HepG2 (cell line): ENCODE measurements at regions of chr10 and their contacts with region 1.

Region 1: GRCh38 chr10:46050941-46051623 is 5.0 kb upstream of the MSMB start:
- DNase-seq: no peak
- ATAC-seq: no peak
- H3K4me3 ChIP-seq: no peak overlapping the region
- H3K27ac ChIP-seq: peak overlapping the region; percentile 75
- H3K4me1 ChIP-seq: peaks cover 88% of the 10 kb centered on the region
- H3K27me3 ChIP-seq: no peaks in the 10 kb centered on the region
- CTCF ChIP-seq: no peak
- EP300 ChIP-seq: no peak
- POLR2A ChIP-seq: no peak
- RAD21 ChIP-seq: no peak

Region 2: GRCh38 chr10:45461034-45461433 is 590.0 kb before region 1 on chr10:
- CTCF ChIA-PET with region 1: no interaction called
- POLR2A ChIA-PET with region 1: no interaction called
- in situ Hi-C with region 1: no loop called
- intact Hi-C with region 1: no loop called
- DNase-seq: no peak
- ATAC-seq: no peak
- H3K4me3 ChIP-seq: no peak overlapping the region
- H3K27ac ChIP-seq: no peak overlapping the region
- H3K4me1 ChIP-seq: peaks cover 5% of the 10 kb centered on the region; the same call in 1 of the 2 replicates
- H3K27me3 ChIP-seq: no peaks in the 10 kb centered on the region
- CTCF ChIP-seq: no peak
- EP300 ChIP-seq: no peak
- POLR2A ChIP-seq: no peak
- RAD21 ChIP-seq: no peak

Region 3: GRCh38 chr10:46035923-46036849 is 14.9 kb before region 1 on chr10:
- CTCF ChIA-PET with region 1: no interaction called
- POLR2A ChIA-PET with region 1: interaction called, 49 read pairs
- in situ Hi-C with region 1: no loop called
- intact Hi-C with region 1: no loop called
- DNase-seq: peak; percentile 90
- ATAC-seq: peak; percentile 72
- H3K4me3 ChIP-seq: peak overlapping the region in 2 of 3 experiments; percentile 18 to 41; a peak in 3 of 6 replicates
- H3K27ac ChIP-seq: peak overlapping the region; percentile 84
- H3K4me1 ChIP-seq: peaks cover 66% of the 10 kb centered on the region
- H3K27me3 ChIP-seq: no peaks in the 10 kb centered on the region
- CTCF ChIP-seq: peak; percentile 51
- EP300 ChIP-seq: peak; percentile 43 to 60; a peak in 2 of 4 replicates
- POLR2A ChIP-seq: peak in 1 of 2 experiments; percentile 47; a peak in 2 of 4 replicates
- RAD21 ChIP-seq: peak; percentile 66

Region 4: GRCh38 chr10:46092524-46093081 is 41.5 kb after region 1 on chr10:
- CTCF ChIA-PET with region 1: no interaction called
- POLR2A ChIA-PET with region 1: no interaction called
- in situ Hi-C with region 1: no loop called
- intact Hi-C with region 1: loop called (anchors 5 kb)
- DNase-seq: no peak
- ATAC-seq: no peak
- H3K4me3 ChIP-seq: peak overlapping the region in 1 of 3 experiments; percentile 18; a peak in 1 of 6 replicates
- H3K27ac ChIP-seq: no peak overlapping the region
- H3K4me1 ChIP-seq: peaks cover 86% of the 10 kb centered on the region
- H3K27me3 ChIP-seq: no peaks in the 10 kb centered on the region
- CTCF ChIP-seq: no peak
- EP300 ChIP-seq: no peak
- POLR2A ChIP-seq: no peak
- RAD21 ChIP-seq: no peak

Region 5: GRCh38 chr10:46228563-46229071 is 177.5 kb after region 1 on chr10:
- CTCF ChIA-PET with region 1: no interaction called
- POLR2A ChIA-PET with region 1: no interaction called
- in situ Hi-C with region 1: no loop called
- intact Hi-C with region 1: no loop called
- DNase-seq: peak; percentile 69
- ATAC-seq: peak; percentile 94
- H3K4me3 ChIP-seq: peak overlapping the region in 2 of 3 experiments; percentile 3 to 59; a peak in 2 of 6 replicates
- H3K27ac ChIP-seq: no peak overlapping the region
- H3K4me1 ChIP-seq: peaks cover 21% of the 10 kb centered on the region
- H3K27me3 ChIP-seq: peaks cover 0 to 25% of the 10 kb centered on the region in 2 experiments; a peak in 3 of 5 replicates
- CTCF ChIP-seq: peak; percentile 95
- EP300 ChIP-seq: no peak
- POLR2A ChIP-seq: no peak
- RAD21 ChIP-seq: peak; percentile 72

Region 6: GRCh38 chr10:46284293-46285229 is 233.5 kb after region 1 on chr10:
- CTCF ChIA-PET with region 1: no interaction called
- POLR2A ChIA-PET with region 1: no interaction called
- in situ Hi-C with region 1: no loop called
- intact Hi-C with region 1: no loop called
- DNase-seq: peak; percentile 31
- ATAC-seq: peak; percentile 91
- H3K4me3 ChIP-seq: peak overlapping the region; percentile 44 to 71 (median 53)
- H3K27ac ChIP-seq: no peak overlapping the region
- H3K4me1 ChIP-seq: no peaks in the 10 kb centered on the region
- H3K27me3 ChIP-seq: peaks cover 4 to 71% of the 10 kb centered on the region in 2 experiments; a peak in 4 of 5 replicates
- CTCF ChIP-seq: no peak
- EP300 ChIP-seq: no peak
- POLR2A ChIP-seq: no peak
- RAD21 ChIP-seq: 0 out of 2 replicates have a peak, but pooled peaks have one; percentile 11